Esophagus muscularis mucosa (tissue), 4 donors: ENCODE measurements at regions of chr17 and their contacts with region 1.

Region 1: DNA sequence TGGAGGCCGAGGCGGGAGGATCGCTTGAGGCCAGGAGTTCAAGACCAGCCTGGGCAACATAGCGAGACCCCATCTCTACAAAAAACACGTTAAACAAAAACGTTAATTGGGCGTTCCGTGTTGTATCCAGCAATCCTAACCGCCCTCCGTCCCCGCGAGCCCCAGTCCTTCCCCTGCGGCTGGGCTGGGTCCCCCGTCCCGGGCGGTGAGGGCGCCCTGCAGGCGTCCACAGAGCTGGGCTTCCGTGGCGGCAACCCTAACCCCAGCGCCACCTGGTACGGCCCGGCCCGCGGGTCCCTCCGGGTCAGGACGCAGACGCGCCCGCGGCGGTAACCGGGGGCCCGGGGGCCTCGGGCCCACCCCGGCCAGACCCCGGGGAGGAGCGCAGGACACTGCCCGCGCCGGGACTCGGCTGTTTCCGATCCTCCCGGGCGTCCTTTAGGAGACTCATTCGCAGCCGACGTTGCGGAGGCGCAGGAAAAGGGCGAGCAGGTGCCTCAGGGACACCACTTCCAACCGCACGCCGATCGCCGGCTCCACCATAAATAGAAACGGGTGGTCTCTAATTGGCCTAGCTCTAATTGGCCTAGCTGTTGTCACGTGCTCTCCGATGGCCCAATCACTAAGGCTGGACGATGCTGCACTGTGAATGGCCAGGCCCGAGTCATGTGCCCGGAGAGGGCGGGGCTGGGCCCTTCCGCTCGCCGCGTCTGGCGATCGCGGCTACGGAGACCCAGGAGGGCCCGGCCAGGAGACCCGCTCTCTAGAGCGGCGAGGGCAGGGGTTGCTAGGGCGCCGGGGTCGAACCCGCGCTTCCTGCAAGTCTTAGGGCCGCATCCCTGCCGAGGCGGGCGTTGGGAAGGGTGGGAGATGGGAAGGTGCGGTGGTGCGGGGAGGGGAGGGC is 19.0 kb upstream of the CSNK1D start:
- DNase-seq: peak; percentile 99
- H3K4me3 ChIP-seq: peak overlapping the region; percentile 66 to 87 (median 79)
- H3K27ac ChIP-seq: peak overlapping the region; percentile 94 to 99 (median 96)
- H3K4me1 ChIP-seq: peaks cover 44 to 69% (median 62%) of the 10 kb centered on the region in 4 donors
- H3K27me3 ChIP-seq: no peaks in the 10 kb centered on the region
- CTCF ChIP-seq: no peak
- EP300 ChIP-seq: no peak
- POLR2A ChIP-seq: peak; percentile 98

Region 2: DNA sequence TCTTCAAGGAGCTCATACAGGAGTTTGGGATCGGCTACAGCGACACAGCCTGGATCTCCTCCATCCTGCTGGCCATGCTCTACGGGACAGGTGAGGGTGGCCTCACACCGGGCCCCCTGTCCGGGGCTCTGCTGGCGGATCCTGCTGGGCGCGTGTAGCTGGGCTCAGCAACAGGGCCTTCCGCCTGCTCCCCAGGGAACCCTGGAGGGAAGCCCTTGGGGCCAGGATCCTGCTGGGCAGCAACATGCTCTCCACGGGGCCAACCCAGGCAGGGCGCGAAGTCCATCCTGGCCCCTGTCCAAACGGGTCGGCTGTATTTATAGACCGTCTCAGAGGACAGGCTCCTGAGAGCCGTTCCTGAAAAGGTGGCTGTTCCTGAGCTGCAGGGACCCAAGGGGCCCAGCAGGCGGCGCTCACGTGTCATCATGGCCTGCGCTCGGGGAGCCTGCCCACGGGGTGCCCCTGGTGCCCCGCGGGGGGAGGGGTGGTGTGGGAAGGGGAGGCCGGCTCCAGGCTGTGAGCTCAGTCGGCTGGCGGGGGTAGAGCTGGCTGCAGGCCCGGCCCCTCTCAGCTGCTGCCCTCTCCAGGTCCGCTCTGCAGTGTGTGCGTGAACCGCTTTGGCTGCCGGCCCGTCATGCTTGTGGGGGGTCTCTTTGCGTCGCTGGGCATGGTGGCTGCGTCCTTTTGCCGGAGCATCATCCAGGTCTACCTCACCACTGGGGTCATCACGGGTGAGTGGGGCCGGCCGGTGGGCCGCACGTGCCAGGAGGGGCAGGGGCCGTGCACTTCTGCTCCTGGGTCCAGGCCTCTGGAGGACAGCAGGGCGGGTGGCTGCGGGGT is 56.1 kb before region 1 on chr17:
- intact Hi-C with region 1: loop called (anchors 5 kb)
- DNase-seq: peak; percentile 93
- H3K4me3 ChIP-seq: peak overlapping the region in 1 of 4 donors; percentile 7
- H3K27ac ChIP-seq: peak overlapping the region; percentile 81 to 89 (median 85)
- H3K4me1 ChIP-seq: peaks cover 71 to 96% (median 89%) of the 10 kb centered on the region in 4 donors
- H3K27me3 ChIP-seq: no peaks in the 10 kb centered on the region
- CTCF ChIP-seq: peak; percentile 95 to 99 (median 98)
- EP300 ChIP-seq: no peak
- POLR2A ChIP-seq: no peak

Region 3: GRCh38 chr17:82273327-82274133 is 19.0 kb before region 1 on chr17 and contains the start of gene CSNK1D:
- intact Hi-C with region 1: loop called (anchors 2 kb)
- DNase-seq: peak; percentile 98
- H3K4me3 ChIP-seq: peak within 1 kb of the TSS; percentile 98 to 100 (median 100)
- H3K27ac ChIP-seq: peak within 1 kb of the TSS; percentile 99 to 100 (median 100)
- H3K4me1 ChIP-seq: peaks cover 50 to 62% (median 57%) of the 10 kb centered on the region in 4 donors
- H3K27me3 ChIP-seq: no peaks in the 10 kb centered on the region
- CTCF ChIP-seq: no peak
- EP300 ChIP-seq: no peak
- POLR2A ChIP-seq: peak; percentile 86
- total RNA-seq, gene CSNK1D: 47.2 to 65.5 (median 61.0) TPM